T-cell (primary cell): ENCODE measurements at regions of chr14 and their contacts with region 1.

Region 1: DNA sequence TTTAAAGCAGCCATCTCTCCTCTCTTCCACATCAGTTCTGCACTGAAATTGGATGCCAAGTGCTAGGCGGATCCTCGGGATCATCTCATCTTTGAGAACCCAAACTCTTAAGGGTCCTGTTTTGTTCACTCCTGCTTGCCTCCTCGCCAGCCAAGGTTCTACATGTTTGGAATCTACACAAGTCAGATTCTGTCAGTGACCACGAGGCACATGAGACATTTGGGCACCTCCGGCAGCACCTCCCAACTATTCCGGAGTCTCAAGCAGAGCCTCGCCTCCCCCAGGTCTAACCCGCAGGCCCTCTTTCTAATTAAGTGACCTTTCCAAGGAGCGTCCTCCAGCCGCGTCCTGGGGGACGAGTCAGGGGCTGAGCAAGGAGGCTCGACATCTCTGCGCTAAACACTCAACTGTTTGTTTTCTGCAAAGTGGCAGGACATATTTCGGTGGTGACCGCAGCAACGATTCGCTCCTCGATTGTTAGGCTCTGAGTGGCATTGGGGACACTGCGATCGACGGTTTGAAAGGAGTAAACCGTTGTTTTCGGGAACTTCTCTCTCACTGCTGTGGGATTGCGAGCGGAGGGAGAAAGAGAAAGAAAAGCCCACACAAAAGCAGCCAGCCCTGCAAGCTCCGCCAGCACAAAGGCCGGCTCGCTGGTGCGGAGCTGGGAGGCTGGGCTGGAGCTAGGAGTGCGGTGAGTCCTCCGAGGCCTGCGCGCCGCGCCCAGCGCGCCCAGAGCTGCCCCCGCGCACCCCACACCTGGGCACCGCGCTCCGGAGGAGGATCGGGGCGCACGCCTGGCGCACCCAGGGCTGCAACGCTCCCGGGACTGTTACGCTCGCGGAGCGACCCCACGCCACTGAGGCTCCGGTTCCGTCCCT is 640 bp downstream of the ARMH4 start:
- DNase-seq: peak in 3 of 35 experiments; percentile 5 to 8 (median 7)
- ATAC-seq: peak; percentile 32 to 50 (median 44)
- H3K4me3 ChIP-seq: peak overlapping the region; percentile 52 to 85
- H3K4me3 Mint-ChIP-seq: peak overlapping the region; percentile 65 to 80 (median 76)
- H3K27ac ChIP-seq: no peak overlapping the region
- H3K27ac Mint-ChIP-seq: no peak overlapping the region
- H3K4me1 ChIP-seq: peaks cover 0 to 15% of the 10 kb centered on the region in 2 experiments
- H3K4me1 Mint-ChIP-seq: peaks cover 16 to 19% (median 18%) of the 10 kb centered on the region in 3 donors
- H3K27me3 ChIP-seq: peaks cover 16 to 37% of the 10 kb centered on the region in 2 experiments
- H3K27me3 Mint-ChIP-seq: peaks cover 45 to 66% of the 10 kb centered on the region in 2 donors

Region 2: GRCh38 chr14:58107041-58107440 is 44.3 kb before region 1 on chr14:
- CTCF ChIA-PET with region 1: interaction called in 1 of 2 experiments, 11 read pairs
- POLR2A ChIA-PET with region 1: no interaction called
- DNase-seq: no peak
- ATAC-seq: no peak
- H3K4me3 ChIP-seq: no peak overlapping the region
- H3K4me3 Mint-ChIP-seq: no peak overlapping the region
- H3K27ac ChIP-seq: no peak overlapping the region
- H3K27ac Mint-ChIP-seq: no peak overlapping the region
- H3K4me1 ChIP-seq: no peaks in the 10 kb centered on the region
- H3K4me1 Mint-ChIP-seq: no peaks in the 10 kb centered on the region
- H3K27me3 ChIP-seq: no peaks in the 10 kb centered on the region
- H3K27me3 Mint-ChIP-seq: peaks cover 4 to 16% of the 10 kb centered on the region in 2 donors